CD8-positive, alpha-beta T cell (primary cell): ENCODE measurements at regions of chr6 and their contacts with region 1.

Region 1: DNA sequence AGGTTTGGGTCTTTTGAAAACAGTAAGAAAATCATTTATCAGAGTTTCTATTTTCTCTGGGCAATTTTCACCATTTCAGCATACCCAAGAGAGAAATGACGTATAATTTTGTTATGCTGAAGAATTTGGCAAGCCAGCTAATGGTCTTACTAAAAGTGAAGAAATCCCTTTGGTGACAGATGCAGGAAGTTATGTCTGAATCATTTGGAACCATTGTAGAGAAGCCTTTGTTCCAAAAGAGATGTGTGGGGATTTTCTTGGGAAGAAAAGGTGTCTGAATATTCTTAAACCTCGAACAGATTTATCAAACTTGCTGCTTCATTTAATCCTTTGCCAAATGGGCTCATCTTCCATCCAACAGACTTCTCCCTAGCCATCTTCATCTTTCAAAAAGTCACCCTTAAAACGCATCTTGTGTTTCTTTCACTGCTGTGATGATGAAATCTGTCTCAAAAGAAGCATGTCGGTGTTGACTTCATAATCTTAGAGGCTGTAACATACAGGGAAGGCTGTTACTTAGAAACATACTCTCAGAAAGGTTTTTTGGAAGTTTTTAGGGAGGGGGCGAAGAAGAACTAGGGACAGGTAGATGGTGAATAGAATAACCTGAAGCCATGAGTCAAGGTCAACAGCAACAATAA is 39.5 kb downstream of the CITED2 start:
- DNase-seq: peak in 1 of 9 experiments; percentile 17
- ATAC-seq: no peak
- H3K4me3 ChIP-seq: no peak overlapping the region
- H3K4me3 Mint-ChIP-seq: no peak overlapping the region
- H3K27ac ChIP-seq: no peak overlapping the region
- H3K27ac Mint-ChIP-seq: no peak overlapping the region
- H3K4me1 ChIP-seq: no peaks in the 10 kb centered on the region
- H3K4me1 Mint-ChIP-seq: peaks cover 4% of the 10 kb centered on the region
- H3K27me3 ChIP-seq: no peaks in the 10 kb centered on the region
- H3K27me3 Mint-ChIP-seq: no peaks in the 10 kb centered on the region
- CTCF ChIP-seq: no peak

Region 2: DNA sequence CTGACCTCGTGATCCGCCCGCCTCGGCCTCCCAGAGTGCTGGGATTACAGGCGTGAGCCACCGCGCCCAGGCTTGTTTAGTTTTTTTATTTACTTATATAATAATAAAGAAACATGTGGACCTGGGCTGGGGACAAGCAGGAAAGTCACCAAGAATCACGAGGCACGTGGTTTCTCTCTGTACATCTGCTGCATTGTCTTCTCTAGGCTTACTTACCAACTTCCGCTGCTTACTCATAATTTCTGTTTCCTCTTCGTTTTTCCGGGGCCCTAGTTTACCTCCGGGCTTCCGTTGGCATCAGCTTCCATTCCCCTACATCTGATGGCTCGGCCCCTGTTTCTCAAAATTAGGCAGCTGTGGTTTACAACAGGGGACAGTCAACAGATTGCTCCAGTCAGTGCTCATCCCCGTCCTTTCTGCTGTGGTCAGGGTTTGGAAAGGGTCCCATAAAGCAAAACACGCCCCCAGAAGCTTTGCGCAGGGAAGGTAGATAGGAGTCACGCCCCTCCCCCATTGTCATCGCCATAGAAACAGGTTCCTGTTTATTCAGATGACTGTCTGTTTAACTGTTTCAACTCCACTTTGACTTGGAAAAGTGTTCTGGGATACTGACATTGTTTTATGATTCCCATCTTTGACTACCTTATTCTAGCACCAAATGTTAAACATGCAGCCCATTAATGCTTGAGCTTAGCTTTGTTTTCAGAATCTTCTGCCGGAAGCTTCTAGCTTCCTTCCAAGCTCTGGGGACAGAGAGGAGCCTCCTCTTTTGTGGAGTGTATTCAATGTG is 11.2 kb before region 1 on chr6:
- CTCF ChIA-PET with region 1: interaction called, 4 read pairs
- POLR2A ChIA-PET with region 1: interaction called, 10 read pairs
- intact Hi-C with region 1: loop called in 1 of 2 experiments (anchors 2 kb)
- DNase-seq: peak; percentile 56 to 91 (median 84)
- ATAC-seq: peak; percentile 87
- H3K4me3 ChIP-seq: peak overlapping the region; percentile 54 to 59
- H3K4me3 Mint-ChIP-seq: peak overlapping the region; percentile 89
- H3K27ac ChIP-seq: peak overlapping the region; percentile 82 to 97
- H3K27ac Mint-ChIP-seq: peak overlapping the region; percentile 97
- H3K4me1 ChIP-seq: peaks cover 18% of the 10 kb centered on the region
- H3K4me1 Mint-ChIP-seq: peaks cover 35% of the 10 kb centered on the region
- H3K27me3 ChIP-seq: no peaks in the 10 kb centered on the region
- H3K27me3 Mint-ChIP-seq: no peaks in the 10 kb centered on the region
- CTCF ChIP-seq: no peak

Region 3: DNA sequence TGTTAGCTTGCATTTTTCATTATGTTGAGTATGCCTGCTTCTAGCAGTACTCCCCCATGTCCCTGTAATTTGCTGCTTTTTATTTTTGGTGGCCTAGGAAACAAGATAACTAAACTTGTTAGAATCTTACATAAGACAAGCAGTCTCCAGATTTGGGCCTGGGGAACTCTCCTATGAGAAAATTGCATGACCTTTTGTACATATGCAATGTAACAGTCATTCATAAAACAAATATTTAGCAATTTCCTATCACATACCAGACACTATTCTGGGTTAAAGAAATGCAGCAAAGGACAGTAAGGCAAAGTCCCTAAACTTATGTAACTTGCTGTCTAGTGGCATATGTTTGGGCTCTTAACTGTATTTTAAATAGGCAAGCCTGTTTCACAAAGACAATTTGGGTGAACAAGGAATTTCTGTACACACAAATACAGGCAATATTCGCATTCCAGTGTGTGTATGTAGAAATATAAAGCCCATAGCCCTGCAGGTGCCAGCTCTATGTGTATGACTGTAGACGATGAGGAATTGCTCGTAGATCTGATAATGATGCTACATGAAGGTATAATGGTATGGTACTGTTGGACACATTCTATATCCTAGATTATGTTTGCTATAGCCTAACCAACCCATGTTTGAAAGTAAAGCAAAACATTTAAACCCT is 344.7 kb after region 1 on chr6:
- CTCF ChIA-PET with region 1: no interaction called
- POLR2A ChIA-PET with region 1: no interaction called
- intact Hi-C with region 1: loop called in 1 of 2 experiments (anchors 5 kb)
- DNase-seq: no peak
- ATAC-seq: no peak
- H3K4me3 ChIP-seq: no peak overlapping the region
- H3K4me3 Mint-ChIP-seq: no peak overlapping the region
- H3K27ac ChIP-seq: no peak overlapping the region
- H3K27ac Mint-ChIP-seq: no peak overlapping the region
- H3K4me1 ChIP-seq: no peaks in the 10 kb centered on the region
- H3K4me1 Mint-ChIP-seq: no peaks in the 10 kb centered on the region
- H3K27me3 ChIP-seq: no peaks in the 10 kb centered on the region
- H3K27me3 Mint-ChIP-seq: no peaks in the 10 kb centered on the region
- CTCF ChIP-seq: no peak